HepG2 (cell line): ENCODE measurements at regions of chr3 and their contacts with region 1.

Region 1: GRCh38 chr3:113051302-113051711 is 60.5 kb downstream of the GTPBP8 start:
- DNase-seq: peak; percentile 56
- ATAC-seq: peak; percentile 94
- H3K4me3 ChIP-seq: no peak overlapping the region
- H3K27ac ChIP-seq: no peak overlapping the region
- H3K4me1 ChIP-seq: peaks cover 6% of the 10 kb centered on the region; the same call in 1 of the 2 replicates
- H3K27me3 ChIP-seq: no peaks in the 10 kb centered on the region
- CTCF ChIP-seq: peak; percentile 90
- EP300 ChIP-seq: no peak
- POLR2A ChIP-seq: no peak
- RAD21 ChIP-seq: peak; percentile 87

Region 2: GRCh38 chr3:112273536-112273935 is 777.8 kb before region 1 on chr3:
- CTCF ChIA-PET with region 1: no interaction called
- POLR2A ChIA-PET with region 1: no interaction called
- in situ Hi-C with region 1: no loop called
- intact Hi-C with region 1: no loop called
- DNase-seq: no peak
- ATAC-seq: no peak
- H3K4me3 ChIP-seq: no peak overlapping the region
- H3K27ac ChIP-seq: no peak overlapping the region
- H3K4me1 ChIP-seq: no peaks in the 10 kb centered on the region
- H3K27me3 ChIP-seq: no peaks in the 10 kb centered on the region
- CTCF ChIP-seq: no peak
- EP300 ChIP-seq: no peak
- POLR2A ChIP-seq: no peak
- RAD21 ChIP-seq: no peak

Region 3: DNA sequence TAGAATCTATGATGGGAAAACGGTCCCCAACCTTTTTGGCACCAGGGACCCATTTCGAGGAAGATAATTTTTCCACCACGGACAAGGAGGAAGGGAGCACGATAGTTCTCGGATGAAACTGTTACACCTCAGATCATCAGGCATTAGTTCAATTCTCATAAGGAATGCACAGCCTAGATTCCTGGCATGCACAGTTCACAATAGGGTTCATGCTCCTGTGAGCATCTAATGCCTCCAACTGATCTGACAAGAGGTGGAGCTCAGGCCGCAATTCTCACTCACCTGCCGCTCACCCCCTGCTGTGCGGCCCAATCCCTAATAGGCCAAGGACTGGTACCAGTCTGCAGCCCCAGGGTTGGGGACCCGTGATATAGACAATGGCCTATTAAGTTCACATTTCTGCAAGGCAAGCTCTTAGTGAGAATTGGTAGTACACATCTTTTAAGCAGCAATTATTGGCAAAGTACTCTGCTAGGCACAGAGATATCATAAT is 102.9 kb before region 1 on chr3:
- CTCF ChIA-PET with region 1: no interaction called
- POLR2A ChIA-PET with region 1: no interaction called
- in situ Hi-C with region 1: no loop called
- intact Hi-C with region 1: no loop called
- DNase-seq: no peak
- ATAC-seq: no peak
- H3K4me3 ChIP-seq: no peak overlapping the region
- H3K27ac ChIP-seq: no peak overlapping the region
- H3K4me1 ChIP-seq: no peaks in the 10 kb centered on the region
- H3K27me3 ChIP-seq: no peaks in the 10 kb centered on the region
- CTCF ChIP-seq: no peak
- EP300 ChIP-seq: no peak
- POLR2A ChIP-seq: no peak
- RAD21 ChIP-seq: no peak

Region 4: GRCh38 chr3:113035387-113035982 is 15.8 kb before region 1 on chr3:
- CTCF ChIA-PET with region 1: no interaction called
- POLR2A ChIA-PET with region 1: no interaction called
- in situ Hi-C with region 1: no loop called
- intact Hi-C with region 1: no loop called
- DNase-seq: peak; percentile 49
- ATAC-seq: peak; percentile 98
- H3K4me3 ChIP-seq: no peak overlapping the region
- H3K27ac ChIP-seq: no peak overlapping the region
- H3K4me1 ChIP-seq: no peaks in the 10 kb centered on the region
- H3K27me3 ChIP-seq: peaks cover 0 to 1% of the 10 kb centered on the region in 2 experiments; a peak in 1 of 5 replicates
- CTCF ChIP-seq: peak; percentile 74
- EP300 ChIP-seq: no peak
- POLR2A ChIP-seq: no peak
- RAD21 ChIP-seq: no peak

Region 5: DNA sequence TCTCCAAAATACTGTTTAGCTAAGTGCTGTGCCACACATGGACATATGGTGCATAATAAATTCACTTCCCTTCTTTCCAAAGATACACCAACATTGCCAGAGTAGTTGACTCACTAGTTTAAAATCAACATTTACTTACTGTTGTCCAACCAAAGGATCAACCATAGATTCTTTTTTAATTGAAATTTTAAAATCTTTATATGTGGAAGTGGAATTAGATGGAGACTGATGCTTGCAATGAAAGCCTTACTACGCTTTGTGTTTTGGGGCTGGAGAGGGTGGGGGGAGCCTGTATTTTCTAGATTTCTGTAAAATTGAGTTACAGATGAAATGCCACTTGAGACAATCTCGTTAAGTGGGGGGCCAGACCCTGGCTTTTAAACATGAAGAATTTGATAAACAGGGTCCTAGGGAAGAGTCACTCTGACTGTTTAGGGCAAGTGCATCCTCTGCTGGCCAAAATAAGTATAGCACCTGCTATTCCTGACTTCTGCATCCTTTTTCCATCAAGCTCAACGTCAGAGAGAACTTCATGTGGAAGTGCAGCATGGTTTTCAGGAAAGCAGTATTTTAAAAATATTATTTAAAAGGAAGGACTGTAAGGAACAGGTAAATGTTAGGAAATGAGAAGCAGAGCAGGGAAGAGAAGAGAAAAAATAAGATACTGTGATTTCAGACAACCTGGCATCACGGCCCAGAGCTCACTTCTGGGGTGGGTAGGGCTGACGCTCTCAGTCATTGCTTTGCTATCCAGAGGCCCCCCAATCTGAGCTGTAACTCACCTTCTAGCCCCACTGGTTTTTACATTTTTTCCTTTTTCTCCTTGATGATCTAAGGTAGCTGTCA is 236.7 kb after region 1 on chr3:
- CTCF ChIA-PET with region 1: interaction called, 61 read pairs
- POLR2A ChIA-PET with region 1: no interaction called
- in situ Hi-C with region 1: loop called (anchors 5 kb)
- intact Hi-C with region 1: loop called (anchors 1 kb)
- DNase-seq: peak; percentile 43
- ATAC-seq: peak; percentile 56
- H3K4me3 ChIP-seq: no peak overlapping the region
- H3K27ac ChIP-seq: no peak overlapping the region
- H3K4me1 ChIP-seq: peaks cover 18% of the 10 kb centered on the region
- H3K27me3 ChIP-seq: peaks cover 0 to 4% of the 10 kb centered on the region in 2 experiments; a peak in 2 of 5 replicates
- CTCF ChIP-seq: peak; percentile 87
- EP300 ChIP-seq: no peak
- POLR2A ChIP-seq: no peak
- RAD21 ChIP-seq: peak; percentile 80